ENCODE measurements at regions of chrX and their contacts with region 1.

Region 1: GRCh38 chrX:51336584-51336983 is 4.0 kb downstream of the NUDT10 start:
- DNase-seq: peak; percentile 45
- H3K4me3 Mint-ChIP-seq: no peak overlapping the region
- H3K27ac Mint-ChIP-seq: no peak overlapping the region
- H3K4me1 Mint-ChIP-seq: peaks cover 3% of the 10 kb centered on the region
- H3K27me3 Mint-ChIP-seq: no peaks in the 10 kb centered on the region

Region 2: DNA sequence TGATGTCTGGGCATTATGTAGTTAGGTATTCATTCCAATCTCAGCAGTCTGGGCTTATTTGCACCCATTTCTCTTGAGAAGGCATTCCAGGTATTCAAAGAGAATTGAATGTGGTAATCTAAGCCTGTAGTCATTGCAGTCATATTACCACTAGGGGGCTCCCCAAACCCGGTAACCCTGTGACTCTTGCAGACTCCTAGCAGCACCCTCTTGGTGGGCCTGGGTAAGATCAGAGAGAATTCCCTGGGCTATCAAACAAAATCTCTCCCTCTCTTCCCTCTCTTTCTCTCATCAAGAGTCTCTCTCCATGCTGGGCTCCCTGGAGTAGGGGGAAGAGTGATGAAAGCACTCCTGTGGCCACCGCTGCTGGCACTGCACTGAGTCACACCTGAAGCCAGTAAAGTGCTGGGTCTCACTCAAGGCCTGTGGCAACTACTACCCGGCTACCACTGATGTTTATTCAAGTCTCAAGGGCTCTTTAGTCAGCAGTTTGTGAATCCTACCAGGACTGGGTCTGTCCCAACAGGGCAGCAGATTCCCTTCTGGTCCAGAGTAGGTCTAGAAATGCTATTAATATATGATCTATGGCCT is 191.6 kb before region 1 on chrX:
- CTCF ChIA-PET with region 1: no interaction called
- intact Hi-C with region 1: loop called (anchors 10 kb)
- DNase-seq: peak; percentile 52
- H3K4me3 Mint-ChIP-seq: no peak overlapping the region
- H3K27ac Mint-ChIP-seq: no peak overlapping the region
- H3K4me1 Mint-ChIP-seq: no peaks in the 10 kb centered on the region
- H3K27me3 Mint-ChIP-seq: peaks cover 7% of the 10 kb centered on the region

Region 3: DNA sequence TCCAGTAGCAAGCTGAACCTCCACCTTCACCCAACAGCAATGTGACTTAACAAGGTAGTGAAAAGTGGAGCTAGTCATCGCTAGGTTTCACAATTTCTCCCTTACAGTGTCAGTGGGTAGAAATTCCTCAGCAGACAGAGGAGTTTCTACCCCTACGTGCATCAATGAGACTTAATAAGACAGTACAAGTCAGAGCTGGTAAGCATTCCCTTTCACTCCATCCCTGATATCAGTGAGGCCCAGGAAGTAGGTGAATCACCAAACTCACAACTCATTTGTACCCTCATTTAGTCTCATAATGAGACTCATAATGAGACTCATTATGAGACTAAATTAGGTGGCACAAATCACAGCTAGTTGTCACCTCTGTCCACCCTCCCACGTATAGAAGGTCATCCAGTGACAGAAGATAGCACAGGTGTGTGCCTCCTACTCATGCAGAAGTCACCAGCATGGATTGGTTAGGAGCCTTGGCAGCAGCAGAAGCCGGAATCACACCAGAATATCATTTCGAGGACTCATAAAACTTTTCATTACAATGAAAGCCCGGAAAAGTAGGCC is 54.7 kb before region 1 on chrX:
- CTCF ChIA-PET with region 1: no interaction called
- intact Hi-C with region 1: no loop called
- DNase-seq: no peak
- H3K4me3 Mint-ChIP-seq: no peak overlapping the region
- H3K27ac Mint-ChIP-seq: no peak overlapping the region
- H3K4me1 Mint-ChIP-seq: no peaks in the 10 kb centered on the region
- H3K27me3 Mint-ChIP-seq: no peaks in the 10 kb centered on the region

Region 4: DNA sequence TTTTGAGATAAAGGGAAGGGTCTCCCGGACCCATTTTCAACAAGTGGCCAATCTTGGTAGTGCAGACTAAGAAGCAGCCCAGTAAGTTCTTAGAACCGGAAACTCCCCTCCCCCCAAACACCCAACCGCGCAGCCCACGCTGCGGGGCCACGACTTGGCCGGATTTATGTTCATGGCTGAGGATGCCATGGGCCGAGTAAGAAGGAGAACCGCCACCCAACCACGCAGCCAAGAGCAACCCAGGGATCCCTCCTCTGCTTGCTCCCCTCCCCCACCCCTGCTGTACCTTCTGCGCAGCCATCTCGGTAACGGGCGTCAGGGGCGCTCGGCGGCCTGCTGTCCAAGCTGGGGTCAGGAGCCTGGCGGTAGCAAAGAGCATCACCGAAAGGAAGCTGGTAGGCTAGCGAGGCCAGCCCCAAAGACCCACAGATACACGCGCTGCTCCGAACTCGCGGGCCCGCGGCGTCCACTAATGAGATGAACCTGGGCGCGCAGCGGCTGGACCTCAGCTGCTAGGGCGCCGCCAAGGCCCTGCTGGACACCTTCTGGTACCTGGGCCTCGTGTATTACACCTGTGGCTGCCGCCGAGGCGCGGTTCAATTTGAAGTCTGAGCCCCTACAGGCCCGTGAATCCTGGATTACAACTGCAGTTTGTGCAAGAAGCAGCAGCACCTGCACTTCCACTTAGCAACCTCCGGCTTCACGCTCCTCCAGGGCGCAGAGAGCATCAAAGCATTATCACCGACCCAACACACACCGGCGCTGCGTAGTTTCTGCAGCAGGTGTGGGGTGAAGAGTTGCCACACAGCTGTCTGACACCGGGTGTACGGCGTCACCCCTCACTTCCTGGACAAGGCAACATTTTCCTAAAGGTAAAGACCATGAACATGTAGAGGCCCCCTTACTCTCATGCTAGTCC is 59.5 kb after region 1 on chrX:
- CTCF ChIA-PET with region 1: interaction called, 4 read pairs
- intact Hi-C with region 1: loop called (anchors 2 kb)
- DNase-seq: peak; percentile 67
- H3K4me3 Mint-ChIP-seq: peak overlapping the region; percentile 86
- H3K27ac Mint-ChIP-seq: peak overlapping the region; percentile 86
- H3K4me1 Mint-ChIP-seq: peaks cover 49% of the 10 kb centered on the region
- H3K27me3 Mint-ChIP-seq: no peaks in the 10 kb centered on the region

Region 5: DNA sequence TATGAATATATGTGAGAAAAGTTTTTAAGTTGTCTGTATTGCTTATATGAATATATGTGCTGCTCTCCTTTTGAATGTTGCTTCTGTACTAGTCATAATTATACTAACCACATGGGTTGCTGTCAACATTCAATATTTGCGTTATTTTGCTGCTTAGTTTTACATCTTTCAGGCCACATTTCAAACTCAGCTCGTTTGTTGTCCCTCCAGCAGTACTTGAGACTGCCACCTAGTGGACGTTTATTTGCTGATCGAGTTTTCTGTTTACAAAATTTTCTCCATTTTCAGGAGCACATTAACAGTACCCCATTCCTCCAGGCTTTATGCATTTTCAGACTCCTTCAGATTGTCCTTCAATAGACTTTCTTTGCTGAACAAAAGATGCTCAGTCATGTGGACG is 84.0 kb after region 1 on chrX:
- CTCF ChIA-PET with region 1: interaction called, 70 read pairs
- intact Hi-C with region 1: loop called (anchors 1 kb)
- DNase-seq: peak; percentile 37
- H3K4me3 Mint-ChIP-seq: no peak overlapping the region
- H3K27ac Mint-ChIP-seq: no peak overlapping the region
- H3K4me1 Mint-ChIP-seq: peaks cover 6% of the 10 kb centered on the region
- H3K27me3 Mint-ChIP-seq: no peaks in the 10 kb centered on the region

Region 6: DNA sequence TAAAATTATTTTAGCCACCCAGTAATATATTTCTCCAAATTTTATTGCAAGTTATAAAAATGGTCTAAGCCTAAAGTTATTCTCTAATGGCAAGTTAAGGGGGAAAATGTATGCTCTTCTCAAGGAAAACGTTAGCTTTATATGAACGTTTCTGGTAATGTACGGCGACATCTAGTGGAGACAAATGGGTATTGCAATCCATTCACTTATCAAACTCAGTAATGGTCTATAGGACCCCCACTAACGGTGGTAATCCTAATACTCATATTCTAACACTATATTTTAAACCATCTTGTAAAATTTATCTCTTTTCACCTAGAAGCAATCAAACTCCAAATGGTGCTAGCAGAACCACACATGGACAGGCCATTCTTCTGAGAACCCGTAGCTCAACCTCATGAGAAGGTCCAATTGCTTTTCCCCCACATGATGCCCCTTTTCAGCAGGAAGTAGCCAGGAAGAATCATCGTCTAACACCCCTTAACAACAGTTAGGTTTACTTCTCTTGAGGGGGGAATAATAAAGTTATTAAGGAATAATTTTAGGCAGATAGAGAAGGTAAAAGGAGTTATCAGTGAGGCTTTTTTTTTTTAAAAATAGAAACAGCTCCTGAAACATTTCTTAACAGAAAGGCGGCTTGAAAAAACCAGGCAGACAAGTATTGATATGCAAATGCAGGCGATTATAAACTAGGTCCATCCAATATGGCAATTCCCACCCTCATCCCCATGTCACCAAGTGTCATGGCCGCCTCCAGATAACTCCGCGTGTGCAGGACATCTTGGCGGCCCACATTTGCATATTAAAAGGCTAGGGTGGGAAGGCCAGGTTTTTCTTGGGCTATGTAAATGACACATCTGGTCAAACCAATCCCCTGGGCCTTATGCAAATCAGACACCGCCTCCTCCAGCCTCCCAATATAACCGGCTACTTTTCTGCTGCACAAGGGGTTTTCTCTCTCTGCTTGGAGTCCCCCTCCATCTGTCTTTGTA is 124.8 kb after region 1 on chrX:
- CTCF ChIA-PET with region 1: interaction called, 53 read pairs
- intact Hi-C with region 1: loop called (anchors 1 kb)
- DNase-seq: peak; percentile 17
- H3K4me3 Mint-ChIP-seq: no peak overlapping the region
- H3K27ac Mint-ChIP-seq: no peak overlapping the region
- H3K4me1 Mint-ChIP-seq: no peaks in the 10 kb centered on the region
- H3K27me3 Mint-ChIP-seq: no peaks in the 10 kb centered on the region

Region 7: GRCh38 chrX:51813886-51814460 is 477.4 kb after region 1 on chrX:
- CTCF ChIA-PET with region 1: no interaction called
- intact Hi-C with region 1: no loop called
- DNase-seq: no peak
- H3K4me3 Mint-ChIP-seq: no peak overlapping the region
- H3K27ac Mint-ChIP-seq: no peak overlapping the region
- H3K4me1 Mint-ChIP-seq: peaks cover 19% of the 10 kb centered on the region
- H3K27me3 Mint-ChIP-seq: no peaks in the 10 kb centered on the region

Measured in activated naive CD4-positive, alpha-beta T cell treated with anti-CD3 and anti-CD28 coated beads for 36 hours (primary cell).